Gastrocnemius medialis (tissue), 4 donors: ENCODE measurements at regions of chr10 and their contacts with region 1.

Region 1: GRCh38 chr10:5944389-5945189 is 32.8 kb downstream of the IL15RA start:
- DNase-seq: peak; percentile 70 to 86
- ATAC-seq: peak; percentile 84 to 96
- H3K4me3 ChIP-seq: peak overlapping the region in 2 of 4 donors; percentile 39 to 41
- H3K27ac ChIP-seq: peak overlapping the region; percentile 69 to 74 (median 72)
- H3K4me1 ChIP-seq: peaks cover 16 to 30% of the 10 kb centered on the region in 2 donors
- H3K27me3 ChIP-seq: no peaks in the 10 kb centered on the region
- CTCF ChIP-seq: no peak
- POLR2A ChIP-seq: peak in 1 of 2 donors; percentile 42

Region 2: GRCh38 chr10:5977471-5978229 is 33.1 kb after region 1 on chr10 and contains the start of gene IL15RA:
- in situ Hi-C with region 1: no loop called
- intact Hi-C with region 1: loop called (anchors 2 kb)
- DNase-seq: peak; percentile 48 to 76
- ATAC-seq: peak; percentile 75 to 77
- H3K4me3 ChIP-seq: peak within 1 kb of the TSS; percentile 84 to 96 (median 87)
- H3K27ac ChIP-seq: peak within 1 kb of the TSS; percentile 91 to 97 (median 93)
- H3K4me1 ChIP-seq: peaks cover 7 to 19% of the 10 kb centered on the region in 2 donors
- H3K27me3 ChIP-seq: no peaks in the 10 kb centered on the region
- CTCF ChIP-seq: peak in 4 of 5 experiments; percentile 12 to 54 (median 31)
- POLR2A ChIP-seq: peak; percentile 57 to 58
- total RNA-seq, gene IL15RA: 13.1 to 17.6 (median 15.6) TPM

Region 3: DNA sequence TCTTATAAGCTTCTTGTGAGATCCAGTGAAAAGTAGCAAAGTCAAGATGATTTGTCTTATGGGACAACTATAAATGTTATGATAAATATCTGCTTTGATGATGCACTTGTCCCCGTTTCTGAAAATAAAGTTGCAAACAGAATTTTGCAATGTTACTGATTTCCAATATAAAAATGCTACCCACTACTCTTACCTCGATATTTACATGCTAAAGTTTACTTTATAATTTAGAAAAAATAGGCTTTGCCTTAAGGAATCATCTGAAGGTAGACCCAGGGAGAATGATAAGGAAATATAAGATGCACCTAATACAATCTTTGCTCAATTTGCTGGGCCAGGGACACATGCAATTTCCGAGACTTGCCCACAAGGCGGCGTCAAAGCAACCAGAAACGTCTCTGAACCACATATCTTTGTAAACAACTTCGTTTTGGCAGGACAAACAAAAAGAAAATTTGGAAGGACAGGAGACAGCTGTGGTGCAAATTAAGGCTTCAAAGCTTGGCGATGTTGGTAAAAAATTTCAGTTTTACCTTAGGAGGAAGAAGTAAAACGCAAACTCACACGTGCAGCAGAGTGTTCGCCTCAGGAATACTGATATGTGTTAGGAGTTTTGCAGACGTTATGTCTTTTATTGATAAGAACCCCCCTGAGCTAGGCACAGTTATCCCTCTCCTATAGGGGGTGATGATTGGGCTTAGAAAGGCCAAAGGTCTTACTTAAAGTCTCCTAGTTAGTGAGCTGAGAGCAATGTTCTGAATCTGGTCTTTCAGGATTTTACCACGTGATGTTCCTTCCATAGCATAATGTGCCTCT is 501.1 kb after region 1 on chr10:
- in situ Hi-C with region 1: no loop called
- intact Hi-C with region 1: no loop called
- DNase-seq: peak; percentile 41 to 66
- ATAC-seq: peak; percentile 87 to 94
- H3K4me3 ChIP-seq: peak overlapping the region in 1 of 4 donors; percentile 31
- H3K27ac ChIP-seq: peak overlapping the region; percentile 45 to 83 (median 72)
- H3K4me1 ChIP-seq: peaks cover 8 to 11% of the 10 kb centered on the region in 2 donors
- H3K27me3 ChIP-seq: no peaks in the 10 kb centered on the region
- CTCF ChIP-seq: peak; percentile 49 to 65 (median 58)
- POLR2A ChIP-seq: no peak